ENCODE measurements at regions of chr3 and their contacts with region 1.

Region 1: GRCh38 chr3:190321789-190322603 is at the start of gene CLDN1:
- DNase-seq: peak; percentile 43 to 67 (median 66)
- H3K4me3 ChIP-seq: peak within 1 kb of the TSS in 1 of 2 donors; percentile 36
- H3K4me3 Mint-ChIP-seq: peak within 1 kb of the TSS; percentile 50 to 81 (median 76)
- H3K27ac ChIP-seq: no peak within 1 kb of the TSS
- H3K27ac Mint-ChIP-seq: peak within 1 kb of the TSS in 2 of 7 donors; percentile 19 to 63
- H3K4me1 ChIP-seq: no peaks in the 10 kb centered on the region
- H3K4me1 Mint-ChIP-seq: peaks cover 9 to 20% (median 13%) of the 10 kb centered on the region in 4 donors
- H3K27me3 ChIP-seq: peaks cover 6% of the 10 kb centered on the region
- H3K27me3 Mint-ChIP-seq: peaks cover 33 to 39% of the 10 kb centered on the region in 2 donors
- total RNA-seq, gene CLDN1: not detected

Region 2: DNA sequence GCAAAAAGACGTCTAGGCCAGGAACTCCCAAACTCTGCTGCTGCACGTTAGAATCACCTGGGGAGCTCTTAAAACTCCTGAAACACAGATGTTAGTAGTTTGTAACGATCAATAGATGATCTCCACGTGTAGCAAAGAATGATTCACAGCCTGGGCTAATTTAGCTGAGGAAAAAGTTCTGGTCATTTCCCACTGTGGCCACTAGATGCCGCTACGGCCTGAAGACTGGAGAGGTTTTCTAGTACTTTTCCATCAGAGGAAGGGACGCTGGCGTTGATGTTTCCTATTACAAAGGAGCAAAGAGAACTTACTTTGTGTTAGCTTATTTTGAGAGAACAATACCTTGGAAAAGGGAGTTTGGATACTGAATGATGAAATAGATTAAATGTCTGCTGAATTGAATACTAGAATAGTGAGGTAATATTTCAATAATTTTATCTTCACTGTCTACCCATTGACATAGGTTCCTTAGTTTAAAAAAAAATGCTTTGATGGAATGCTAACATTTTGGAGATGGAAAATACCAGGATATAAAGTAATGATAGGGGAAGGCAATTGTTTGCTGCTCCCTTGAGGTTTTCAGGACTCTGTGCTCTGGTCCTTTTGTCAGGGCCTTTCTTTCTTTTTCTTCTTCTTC is 360.4 kb before region 1 on chr3:
- CTCF ChIA-PET with region 1: interaction called, 41 read pairs
- POLR2A ChIA-PET with region 1: no interaction called
- intact Hi-C with region 1: no loop called
- DNase-seq: peak; percentile 40 to 53 (median 50)
- H3K4me3 ChIP-seq: no peak overlapping the region
- H3K4me3 Mint-ChIP-seq: no peak overlapping the region
- H3K27ac ChIP-seq: no peak overlapping the region
- H3K27ac Mint-ChIP-seq: no peak overlapping the region
- H3K4me1 ChIP-seq: peaks cover 6% of the 10 kb centered on the region
- H3K4me1 Mint-ChIP-seq: peaks cover 2 to 8% (median 5%) of the 10 kb centered on the region in 4 donors
- H3K27me3 ChIP-seq: no peaks in the 10 kb centered on the region
- H3K27me3 Mint-ChIP-seq: peaks cover 11 to 14% of the 10 kb centered on the region in 2 donors

Region 3: GRCh38 chr3:189967254-189967865 is 354.6 kb before region 1 on chr3:
- CTCF ChIA-PET with region 1: interaction called, 41 read pairs
- POLR2A ChIA-PET with region 1: no interaction called
- intact Hi-C with region 1: loop called (anchors 1 kb)
- DNase-seq: peak in 4 of 5 donors; percentile 16 to 43 (median 34)
- H3K4me3 ChIP-seq: no peak overlapping the region
- H3K4me3 Mint-ChIP-seq: no peak overlapping the region
- H3K27ac ChIP-seq: no peak overlapping the region
- H3K27ac Mint-ChIP-seq: no peak overlapping the region
- H3K4me1 ChIP-seq: no peaks in the 10 kb centered on the region
- H3K4me1 Mint-ChIP-seq: peaks cover 0 to 2% (median 0%) of the 10 kb centered on the region in 4 donors
- H3K27me3 ChIP-seq: no peaks in the 10 kb centered on the region
- H3K27me3 Mint-ChIP-seq: peaks cover 0 to 4% of the 10 kb centered on the region in 2 donors

Region 4: DNA sequence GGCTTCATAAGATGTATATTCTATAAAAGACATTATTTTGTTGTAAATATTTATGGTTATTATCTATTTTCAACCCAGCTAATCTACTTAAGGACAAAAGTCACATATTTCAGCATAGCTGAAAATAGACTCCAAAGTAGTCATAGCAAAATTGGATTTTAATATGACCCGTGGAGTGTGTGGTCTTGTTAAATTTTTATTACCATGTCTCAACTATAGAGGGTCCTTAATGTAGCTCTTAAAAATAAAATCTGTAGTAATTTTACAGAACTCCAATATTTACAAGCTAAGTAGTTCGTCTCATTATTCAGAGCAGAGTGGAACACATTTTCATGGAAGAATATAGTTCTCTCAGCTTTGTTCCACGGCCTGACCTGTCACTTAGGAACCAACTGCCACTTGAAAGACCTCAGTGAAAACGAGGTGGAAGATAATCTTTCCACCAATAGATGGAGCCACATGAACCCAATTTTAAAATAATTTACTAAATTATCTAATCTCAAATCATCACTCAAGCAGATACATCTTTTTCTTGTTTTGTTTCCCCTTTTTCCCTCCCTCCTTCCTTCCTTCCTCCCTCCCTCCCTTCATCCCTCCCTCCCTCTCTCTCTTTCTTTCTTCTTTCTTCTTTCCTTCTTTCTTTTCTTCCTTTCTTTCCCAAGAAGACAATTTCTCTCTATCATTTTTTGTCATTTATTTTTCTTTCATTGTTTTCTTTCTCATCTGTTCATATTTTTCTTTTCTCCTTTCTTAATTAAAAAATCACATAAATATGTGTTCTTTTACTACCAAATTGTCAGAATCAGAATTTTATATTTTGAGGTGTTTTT is 96.9 kb before region 1 on chr3:
- CTCF ChIA-PET with region 1: interaction called, 7 read pairs
- POLR2A ChIA-PET with region 1: no interaction called
- intact Hi-C with region 1: loop called (anchors 1 kb)
- DNase-seq: peak in 1 of 5 donors; percentile 1
- H3K4me3 ChIP-seq: no peak overlapping the region
- H3K4me3 Mint-ChIP-seq: peak overlapping the region in 1 of 8 donors; percentile 10
- H3K27ac ChIP-seq: no peak overlapping the region
- H3K27ac Mint-ChIP-seq: no peak overlapping the region
- H3K4me1 ChIP-seq: no peaks in the 10 kb centered on the region
- H3K4me1 Mint-ChIP-seq: peaks cover 0 to 1% (median under 1%) of the 10 kb centered on the region in 4 donors
- H3K27me3 ChIP-seq: no peaks in the 10 kb centered on the region
- H3K27me3 Mint-ChIP-seq: peaks cover 1 to 2% of the 10 kb centered on the region in 2 donors

Region 5: GRCh38 chr3:190336516-190337189 is 14.7 kb after region 1 on chr3:
- CTCF ChIA-PET with region 1: interaction called, 19 read pairs
- POLR2A ChIA-PET with region 1: no interaction called
- intact Hi-C with region 1: no loop called
- DNase-seq: no peak
- H3K4me3 ChIP-seq: no peak overlapping the region
- H3K4me3 Mint-ChIP-seq: peak overlapping the region in 1 of 8 donors; percentile 2
- H3K27ac ChIP-seq: no peak overlapping the region
- H3K27ac Mint-ChIP-seq: no peak overlapping the region
- H3K4me1 ChIP-seq: no peaks in the 10 kb centered on the region
- H3K4me1 Mint-ChIP-seq: peaks cover 0 to 1% (median 0%) of the 10 kb centered on the region in 4 donors
- H3K27me3 ChIP-seq: no peaks in the 10 kb centered on the region
- H3K27me3 Mint-ChIP-seq: peaks cover 5 to 6% of the 10 kb centered on the region in 2 donors

Region 6: GRCh38 chr3:190345027-190345821 is 23.2 kb after region 1 on chr3:
- CTCF ChIA-PET with region 1: interaction called, 18 read pairs
- POLR2A ChIA-PET with region 1: no interaction called
- intact Hi-C with region 1: no loop called
- DNase-seq: no peak
- H3K4me3 ChIP-seq: no peak overlapping the region
- H3K4me3 Mint-ChIP-seq: no peak overlapping the region
- H3K27ac ChIP-seq: no peak overlapping the region
- H3K27ac Mint-ChIP-seq: no peak overlapping the region
- H3K4me1 ChIP-seq: no peaks in the 10 kb centered on the region
- H3K4me1 Mint-ChIP-seq: peaks cover 0 to 1% (median 0%) of the 10 kb centered on the region in 4 donors
- H3K27me3 ChIP-seq: no peaks in the 10 kb centered on the region
- H3K27me3 Mint-ChIP-seq: peaks cover 5 to 7% of the 10 kb centered on the region in 2 donors

Region 7: GRCh38 chr3:190585805-190586630 is 264.0 kb after region 1 on chr3:
- CTCF ChIA-PET with region 1: no interaction called
- POLR2A ChIA-PET with region 1: no interaction called
- intact Hi-C with region 1: no loop called
- DNase-seq: no peak
- H3K4me3 ChIP-seq: no peak overlapping the region
- H3K4me3 Mint-ChIP-seq: peak overlapping the region in 7 of 8 donors; percentile 15 to 68 (median 37)
- H3K27ac ChIP-seq: no peak overlapping the region
- H3K27ac Mint-ChIP-seq: peak overlapping the region; percentile 8 to 58 (median 33)
- H3K4me1 ChIP-seq: peaks cover 22% of the 10 kb centered on the region
- H3K4me1 Mint-ChIP-seq: peaks cover 15 to 23% (median 18%) of the 10 kb centered on the region in 4 donors
- H3K27me3 ChIP-seq: no peaks in the 10 kb centered on the region
- H3K27me3 Mint-ChIP-seq: no peaks in the 10 kb centered on the region

Measured in CD4-positive, alpha-beta memory T cell (primary cell).